Activated CD8-positive, alpha-beta memory T cell treated with anti-CD3 and anti-CD28 coated beads, Interleukin-2, amount 10 ng/mL, durations not matched to agents 7 days and 5 days (primary cell): ENCODE measurements at regions of chrX and their contacts with region 1.

Region 1: GRCh38 chrX:153507484-153508178 is 9.8 kb upstream of the ATP2B3 start:
- DNase-seq: peak; percentile 85
- ATAC-seq: peak; percentile 99
- H3K4me3 Mint-ChIP-seq: no peak overlapping the region
- H3K27ac Mint-ChIP-seq: no peak overlapping the region
- H3K4me1 Mint-ChIP-seq: peaks cover 5% of the 10 kb centered on the region
- H3K27me3 Mint-ChIP-seq: no peaks in the 10 kb centered on the region

Region 2: DNA sequence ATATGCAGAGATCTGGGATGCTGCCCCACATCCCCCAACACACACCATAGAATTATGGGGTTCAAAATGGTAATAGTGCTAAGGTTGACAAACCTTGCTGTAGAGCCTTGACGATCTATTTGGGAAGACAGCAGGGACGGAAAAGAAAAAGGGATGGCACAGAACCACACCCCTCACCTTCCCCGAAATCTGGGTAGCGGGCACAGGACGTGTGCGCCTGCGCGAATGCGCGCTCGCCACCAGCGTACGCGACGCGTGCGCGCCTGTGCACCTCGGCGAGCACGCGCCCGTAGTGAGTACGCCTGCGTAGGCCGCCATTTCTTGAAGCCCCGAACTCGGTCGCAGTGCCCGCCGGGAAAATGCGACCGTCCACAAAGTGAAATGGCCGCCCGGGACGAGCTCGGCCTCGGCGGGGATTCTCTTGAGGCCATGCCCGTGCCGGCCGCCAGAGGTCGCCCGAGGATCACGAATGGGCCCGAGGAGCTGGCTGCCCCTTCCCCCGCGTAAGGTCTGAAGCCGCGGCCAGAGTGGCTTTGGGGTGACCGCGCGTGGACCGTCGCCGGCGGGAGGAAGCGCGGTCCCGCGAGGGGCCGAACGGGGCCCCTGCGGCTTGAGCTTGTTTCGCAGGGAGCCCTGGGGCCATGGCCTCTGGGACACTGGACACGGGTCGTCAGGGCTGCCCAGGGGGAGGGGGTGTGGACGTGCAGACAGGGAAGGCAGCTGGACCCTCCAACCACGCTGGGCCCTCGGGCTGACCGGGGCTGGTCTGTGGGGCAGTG is 566.1 kb before region 1 on chrX:
- CTCF ChIA-PET with region 1: interaction called, 25 read pairs
- DNase-seq: peak; percentile 93
- ATAC-seq: peak; percentile 99
- H3K4me3 Mint-ChIP-seq: peak overlapping the region; percentile 85
- H3K27ac Mint-ChIP-seq: peak overlapping the region; percentile 75
- H3K4me1 Mint-ChIP-seq: peaks cover 11% of the 10 kb centered on the region
- H3K27me3 Mint-ChIP-seq: no peaks in the 10 kb centered on the region

Region 3: GRCh38 chrX:153032397-153033118 is 475.1 kb before region 1 on chrX:
- CTCF ChIA-PET with region 1: interaction called, 23 read pairs
- DNase-seq: peak; percentile 79
- ATAC-seq: peak; percentile 86
- H3K4me3 Mint-ChIP-seq: peak overlapping the region; percentile 83
- H3K27ac Mint-ChIP-seq: peak overlapping the region; percentile 92
- H3K4me1 Mint-ChIP-seq: peaks cover 16% of the 10 kb centered on the region
- H3K27me3 Mint-ChIP-seq: no peaks in the 10 kb centered on the region

Region 4: GRCh38 chrX:153400146-153401127 is 107.2 kb before region 1 on chrX:
- CTCF ChIA-PET with region 1: no interaction called
- DNase-seq: peak; percentile 73
- ATAC-seq: peak; percentile 78
- H3K4me3 Mint-ChIP-seq: no peak overlapping the region
- H3K27ac Mint-ChIP-seq: no peak overlapping the region
- H3K4me1 Mint-ChIP-seq: peaks cover 31% of the 10 kb centered on the region
- H3K27me3 Mint-ChIP-seq: peaks cover 7% of the 10 kb centered on the region

Region 5: GRCh38 chrX:153460845-153461244 is 46.8 kb before region 1 on chrX:
- CTCF ChIA-PET with region 1: interaction called, 13 read pairs
- DNase-seq: peak; percentile 51
- ATAC-seq: peak; percentile 49
- H3K4me3 Mint-ChIP-seq: no peak overlapping the region
- H3K27ac Mint-ChIP-seq: no peak overlapping the region
- H3K4me1 Mint-ChIP-seq: no peaks in the 10 kb centered on the region
- H3K27me3 Mint-ChIP-seq: no peaks in the 10 kb centered on the region

Region 6: GRCh38 chrX:153470435-153471363 is 36.9 kb before region 1 on chrX and contains the start of gene HAUS7:
- CTCF ChIA-PET with region 1: interaction called, 56 read pairs
- DNase-seq: peak; percentile 90
- ATAC-seq: peak; percentile 87
- H3K4me3 Mint-ChIP-seq: peak within 1 kb of the TSS; percentile 82
- H3K27ac Mint-ChIP-seq: peak within 1 kb of the TSS; percentile 81
- H3K4me1 Mint-ChIP-seq: peaks cover 11% of the 10 kb centered on the region
- H3K27me3 Mint-ChIP-seq: peaks cover 5% of the 10 kb centered on the region
- total RNA-seq, gene HAUS7: 54.4 to 56.3 TPM